ENCODE measurements at regions of chr10 and their contacts with region 1.

Region 1: GRCh38 chr10:123582084-123582989 is 83.8 kb upstream of the GPR26 start:
- DNase-seq: peak; percentile 60 to 94
- H3K4me3 ChIP-seq: no peak overlapping the region
- H3K27ac ChIP-seq: no peak overlapping the region
- H3K4me1 ChIP-seq: peaks cover 0 to 17% (median 14%) of the 10 kb centered on the region in 4 experiments; a peak in 6 of 7 replicates
- H3K27me3 ChIP-seq: peaks cover 0 to 10% (median 2%) of the 10 kb centered on the region in 4 experiments; a peak in 4 of 7 replicates
- CTCF ChIP-seq: peak; percentile 83 to 97 (median 97)
- EP300 ChIP-seq: peak in 1 of 2 experiments; percentile 11; a peak in 1 of 3 replicates
- POLR2A ChIP-seq: no peak
- RAD21 ChIP-seq: peak; percentile 97 to 99

Region 2: DNA sequence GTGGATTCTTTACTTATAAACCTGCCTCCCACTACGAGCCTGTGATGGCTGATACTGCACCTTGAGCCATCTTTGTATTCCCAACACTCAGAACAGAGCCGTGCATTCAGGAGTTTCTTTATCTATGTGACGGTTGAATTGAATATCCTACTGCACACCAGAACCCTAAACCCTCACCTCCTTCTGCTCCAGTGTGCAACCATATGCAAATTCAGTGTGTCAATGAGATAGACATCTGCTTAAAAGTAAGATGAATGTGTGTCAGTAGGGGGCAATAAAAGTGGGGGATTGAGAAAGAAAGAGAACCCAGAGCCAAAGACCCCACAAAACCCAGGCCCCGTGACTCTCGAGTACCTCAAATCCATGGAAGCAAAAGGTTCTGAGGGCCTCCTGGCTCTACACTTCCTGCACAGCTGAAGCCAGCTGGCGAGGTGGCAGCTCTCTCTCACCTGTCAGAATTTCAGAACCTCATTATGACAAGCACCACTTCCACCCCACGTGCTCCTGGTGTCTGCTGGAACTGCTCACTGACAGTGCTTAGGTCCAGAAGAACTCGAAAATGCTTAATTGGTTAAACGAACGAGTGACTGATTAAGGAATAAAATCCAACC is 59.5 kb before region 1 on chr10:
- CTCF ChIA-PET with region 1: no interaction called
- POLR2A ChIA-PET with region 1: no interaction called
- DNase-seq: no peak
- H3K4me3 ChIP-seq: no peak overlapping the region
- H3K27ac ChIP-seq: no peak overlapping the region
- H3K4me1 ChIP-seq: 0 out of 7 replicates have a peak, but pooled peaks cover 0 to 3% (median 0%) of the 10 kb centered on the region in 4 experiments
- H3K27me3 ChIP-seq: no peaks in the 10 kb centered on the region
- CTCF ChIP-seq: no peak
- EP300 ChIP-seq: no peak
- POLR2A ChIP-seq: no peak
- RAD21 ChIP-seq: no peak

Region 3: GRCh38 chr10:123607386-123607785 is 25.0 kb after region 1 on chr10:
- CTCF ChIA-PET with region 1: interaction called, 12 read pairs
- POLR2A ChIA-PET with region 1: no interaction called
- DNase-seq: peak in 1 of 2 experiments; percentile 43
- H3K4me3 ChIP-seq: peak overlapping the region in 1 of 4 experiments; percentile 33; a peak in 2 of 8 replicates
- H3K27ac ChIP-seq: no peak overlapping the region; the same call in 1 of the 2 replicates
- H3K4me1 ChIP-seq: peaks cover 3 to 20% (median 10%) of the 10 kb centered on the region in 4 experiments; a peak in 5 of 7 replicates
- H3K27me3 ChIP-seq: no peaks in the 10 kb centered on the region
- CTCF ChIP-seq: no peak
- EP300 ChIP-seq: peak in 1 of 2 experiments; percentile 24; a peak in 1 of 3 replicates
- POLR2A ChIP-seq: no peak
- RAD21 ChIP-seq: peak in 1 of 2 experiments; percentile 7; a peak in 1 of 4 replicates

Region 4: DNA sequence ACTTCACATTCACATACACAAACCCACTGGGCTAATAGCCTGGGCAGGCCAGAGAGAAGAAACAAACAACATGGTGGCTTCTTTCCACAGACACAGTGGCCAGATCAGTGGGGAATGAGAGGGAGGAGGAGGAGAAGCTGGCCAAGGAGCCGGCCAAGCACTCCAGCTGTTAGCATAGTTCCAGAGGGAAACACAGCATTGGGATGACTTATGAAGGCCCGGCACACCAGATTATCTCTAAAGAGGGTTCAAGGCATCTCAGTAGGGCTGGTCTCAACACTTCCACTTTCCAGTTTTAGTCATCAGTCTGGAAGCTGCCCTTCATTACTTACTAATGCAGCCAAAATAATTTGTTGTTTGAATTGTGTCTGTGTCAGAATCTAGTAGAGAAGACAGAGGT is 41.7 kb after region 1 on chr10:
- CTCF ChIA-PET with region 1: interaction called, 12 read pairs
- POLR2A ChIA-PET with region 1: interaction called, 3 read pairs
- DNase-seq: no peak
- H3K4me3 ChIP-seq: no peak overlapping the region
- H3K27ac ChIP-seq: no peak overlapping the region
- H3K4me1 ChIP-seq: no peaks in the 10 kb centered on the region
- H3K27me3 ChIP-seq: no peaks in the 10 kb centered on the region
- CTCF ChIP-seq: no peak
- EP300 ChIP-seq: no peak
- POLR2A ChIP-seq: no peak
- RAD21 ChIP-seq: no peak

Region 5: GRCh38 chr10:123648595-123648994 is 66.3 kb after region 1 on chr10:
- CTCF ChIA-PET with region 1: interaction called, 135 read pairs
- POLR2A ChIA-PET with region 1: no interaction called
- DNase-seq: no peak
- H3K4me3 ChIP-seq: no peak overlapping the region
- H3K27ac ChIP-seq: no peak overlapping the region
- H3K4me1 ChIP-seq: no peaks in the 10 kb centered on the region
- H3K27me3 ChIP-seq: no peaks in the 10 kb centered on the region; a peak in 2 of 7 replicates
- CTCF ChIP-seq: no peak
- EP300 ChIP-seq: no peak
- POLR2A ChIP-seq: no peak
- RAD21 ChIP-seq: no peak

Region 6: GRCh38 chr10:123666318-123667236 is 84.2 kb after region 1 on chr10 and contains the start of gene GPR26:
- CTCF ChIA-PET with region 1: interaction called, 401 read pairs
- POLR2A ChIA-PET with region 1: interaction called, 3 read pairs
- DNase-seq: peak in 1 of 2 experiments; percentile 64
- H3K4me3 ChIP-seq: peak within 1 kb of the TSS; percentile 11 to 62 (median 30)
- H3K27ac ChIP-seq: no peak within 1 kb of the TSS
- H3K4me1 ChIP-seq: peaks cover 0 to 15% (median 4%) of the 10 kb centered on the region in 4 experiments; a peak in 4 of 7 replicates
- H3K27me3 ChIP-seq: peaks cover 20 to 45% (median 40%) of the 10 kb centered on the region in 4 experiments
- CTCF ChIP-seq: peak in 2 of 3 experiments; percentile 5 to 10; a peak in 1 of 4 replicates
- EP300 ChIP-seq: no peak
- POLR2A ChIP-seq: no peak
- RAD21 ChIP-seq: peak; percentile 13 to 32; a peak in 1 of 4 replicates
- total RNA-seq, gene GPR26: 0.09 and 0.10 TPM in 2 replicates

Region 7: GRCh38 chr10:123906884-123907652 is 324.7 kb after region 1 on chr10:
- CTCF ChIA-PET with region 1: interaction called, 10 read pairs
- POLR2A ChIA-PET with region 1: no interaction called
- DNase-seq: no peak
- H3K4me3 ChIP-seq: no peak overlapping the region
- H3K27ac ChIP-seq: no peak overlapping the region
- H3K4me1 ChIP-seq: peaks cover 5 to 20% (median 14%) of the 10 kb centered on the region in 4 experiments
- H3K27me3 ChIP-seq: peaks cover 0 to 2% (median 0%) of the 10 kb centered on the region in 4 experiments; a peak in 1 of 7 replicates
- CTCF ChIP-seq: no peak
- EP300 ChIP-seq: no peak
- POLR2A ChIP-seq: no peak
- RAD21 ChIP-seq: no peak